ENCODE measurements at regions of chr20 and their contacts with region 1.

Region 1: GRCh38 chr20:9215539-9215938 is 146.7 kb downstream of the PLCB4 start:
- DNase-seq: peak; percentile 42
- H3K4me3 Mint-ChIP-seq: no peak overlapping the region
- H3K27ac Mint-ChIP-seq: no peak overlapping the region
- H3K4me1 Mint-ChIP-seq: peaks cover 10% of the 10 kb centered on the region
- H3K27me3 Mint-ChIP-seq: no peaks in the 10 kb centered on the region
- CTCF ChIP-seq: peak; percentile 37

Region 2: DNA sequence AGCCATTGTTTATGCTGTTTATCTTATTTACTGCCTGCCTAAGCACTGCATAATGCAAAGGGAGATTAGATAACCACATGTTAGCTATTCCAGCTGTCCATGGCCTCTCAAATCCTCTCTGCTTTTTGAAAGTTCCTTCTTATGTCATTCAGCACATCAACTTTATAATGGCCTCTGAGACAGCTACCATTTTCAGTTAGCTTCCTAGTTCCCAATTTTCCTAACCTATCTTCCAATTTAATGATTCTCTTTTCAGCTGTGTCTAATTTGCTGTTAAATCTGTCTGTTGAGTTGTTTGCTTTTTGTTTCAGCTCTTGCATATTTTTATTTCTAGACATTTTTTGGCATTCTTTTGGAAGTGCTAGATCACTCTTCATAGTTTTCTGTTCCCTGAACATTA is 320.1 kb before region 1 on chr20:
- CTCF ChIA-PET with region 1: no interaction called
- POLR2A ChIA-PET with region 1: no interaction called
- intact Hi-C with region 1: no loop called
- DNase-seq: no peak
- H3K4me3 Mint-ChIP-seq: no peak overlapping the region
- H3K27ac Mint-ChIP-seq: no peak overlapping the region
- H3K4me1 Mint-ChIP-seq: no peaks in the 10 kb centered on the region
- H3K27me3 Mint-ChIP-seq: no peaks in the 10 kb centered on the region
- CTCF ChIP-seq: no peak

Region 3: DNA sequence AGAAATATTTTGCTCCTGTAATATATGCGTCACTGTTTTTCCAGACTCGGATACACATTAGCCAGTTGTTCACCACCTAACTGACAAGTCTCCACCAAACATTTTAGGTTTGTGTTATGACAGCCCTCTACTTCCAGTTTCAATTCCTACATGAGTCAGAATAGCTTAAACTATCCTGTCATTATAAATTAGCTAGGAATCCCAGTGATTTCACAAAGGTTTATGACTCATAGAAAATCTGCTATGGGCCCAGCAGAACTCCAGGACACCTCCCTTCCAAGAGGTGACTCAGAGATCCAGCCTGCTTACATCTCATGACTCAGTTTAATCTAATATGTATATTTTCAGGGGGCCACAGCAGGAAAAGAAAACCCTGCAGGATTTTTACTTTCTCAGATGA is 164.0 kb before region 1 on chr20:
- CTCF ChIA-PET with region 1: interaction called, 4 read pairs
- POLR2A ChIA-PET with region 1: interaction called, 11 read pairs
- intact Hi-C with region 1: no loop called
- DNase-seq: peak; percentile 95
- H3K4me3 Mint-ChIP-seq: peak overlapping the region; percentile 33
- H3K27ac Mint-ChIP-seq: peak overlapping the region; percentile 78
- H3K4me1 Mint-ChIP-seq: peaks cover 14% of the 10 kb centered on the region
- H3K27me3 Mint-ChIP-seq: no peaks in the 10 kb centered on the region
- CTCF ChIP-seq: no peak

Region 4: DNA sequence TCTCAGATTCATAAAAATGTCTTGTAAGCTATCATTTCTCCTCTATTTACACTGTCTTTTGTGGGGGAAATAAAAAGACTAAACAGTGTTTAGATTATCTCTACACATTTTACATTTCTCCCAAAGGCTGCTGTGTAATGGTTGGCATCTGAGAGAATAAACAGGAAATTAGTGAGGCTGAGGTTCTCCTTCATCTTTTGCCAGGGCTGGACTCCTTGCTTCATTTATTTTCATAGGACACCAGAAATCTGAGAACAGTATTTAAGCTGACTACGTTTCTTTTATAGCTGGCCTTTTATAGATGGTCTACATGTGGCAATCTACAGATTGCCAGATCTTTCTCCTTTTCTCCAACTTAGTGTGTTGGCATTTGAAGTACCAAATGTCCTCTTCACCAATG is 105.2 kb before region 1 on chr20:
- CTCF ChIA-PET with region 1: no interaction called
- POLR2A ChIA-PET with region 1: no interaction called
- intact Hi-C with region 1: no loop called
- DNase-seq: peak; percentile 62
- H3K4me3 Mint-ChIP-seq: no peak overlapping the region
- H3K27ac Mint-ChIP-seq: no peak overlapping the region
- H3K4me1 Mint-ChIP-seq: peaks cover 4% of the 10 kb centered on the region
- H3K27me3 Mint-ChIP-seq: no peaks in the 10 kb centered on the region
- CTCF ChIP-seq: no peak

Region 5: GRCh38 chr20:9225879-9226278 is 10.3 kb after region 1 on chr20:
- CTCF ChIA-PET with region 1: no interaction called
- POLR2A ChIA-PET with region 1: interaction called, 10 read pairs
- intact Hi-C with region 1: no loop called
- DNase-seq: no peak
- H3K4me3 Mint-ChIP-seq: no peak overlapping the region
- H3K27ac Mint-ChIP-seq: no peak overlapping the region
- H3K4me1 Mint-ChIP-seq: no peaks in the 10 kb centered on the region
- H3K27me3 Mint-ChIP-seq: no peaks in the 10 kb centered on the region
- CTCF ChIP-seq: no peak

Region 6: GRCh38 chr20:9306517-9306916 is 91.0 kb after region 1 on chr20:
- CTCF ChIA-PET with region 1: interaction called, 3 read pairs
- POLR2A ChIA-PET with region 1: interaction called, 11 read pairs
- intact Hi-C with region 1: no loop called
- DNase-seq: peak; percentile 95
- H3K4me3 Mint-ChIP-seq: peak overlapping the region; percentile 18
- H3K27ac Mint-ChIP-seq: peak overlapping the region; percentile 85
- H3K4me1 Mint-ChIP-seq: peaks cover 33% of the 10 kb centered on the region
- H3K27me3 Mint-ChIP-seq: no peaks in the 10 kb centered on the region
- CTCF ChIP-seq: no peak